ENCODE measurements at regions of chr10 and their contacts with region 1.

Region 1: DNA sequence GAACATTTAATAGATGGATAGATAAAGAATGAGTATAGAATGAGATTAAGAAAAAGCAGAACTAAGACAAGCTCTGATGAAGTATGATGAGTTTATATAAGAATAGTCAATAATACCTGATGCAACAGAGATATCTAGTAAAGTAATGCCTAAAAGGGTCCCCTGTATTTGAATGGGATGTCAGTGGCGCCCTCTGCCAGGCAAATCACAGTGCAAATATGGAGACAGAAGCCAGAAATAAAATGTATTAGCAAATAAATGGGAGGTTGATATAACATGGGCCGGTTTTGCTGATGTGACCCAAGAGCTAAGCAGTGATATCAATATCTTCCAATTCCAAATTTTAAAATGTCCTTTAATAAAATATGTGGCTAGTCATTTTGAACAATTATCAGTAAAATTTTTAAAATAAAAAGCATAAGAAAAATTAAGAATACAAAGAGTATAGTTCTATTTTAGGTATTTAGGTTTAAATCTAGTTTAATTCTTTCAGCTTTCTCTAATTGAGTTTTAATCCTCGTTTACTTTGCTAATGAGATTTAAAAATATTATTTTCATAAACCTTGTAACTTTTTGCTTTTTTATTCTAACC is 62.6 kb downstream of the ADK start:
- DNase-seq: peak; percentile 54
- H3K4me3 Mint-ChIP-seq: no peak overlapping the region
- H3K27ac Mint-ChIP-seq: peak overlapping the region; percentile 62
- H3K4me1 Mint-ChIP-seq: peaks cover 17% of the 10 kb centered on the region
- H3K27me3 Mint-ChIP-seq: no peaks in the 10 kb centered on the region
- CTCF ChIP-seq: peak; percentile 46

Region 2: DNA sequence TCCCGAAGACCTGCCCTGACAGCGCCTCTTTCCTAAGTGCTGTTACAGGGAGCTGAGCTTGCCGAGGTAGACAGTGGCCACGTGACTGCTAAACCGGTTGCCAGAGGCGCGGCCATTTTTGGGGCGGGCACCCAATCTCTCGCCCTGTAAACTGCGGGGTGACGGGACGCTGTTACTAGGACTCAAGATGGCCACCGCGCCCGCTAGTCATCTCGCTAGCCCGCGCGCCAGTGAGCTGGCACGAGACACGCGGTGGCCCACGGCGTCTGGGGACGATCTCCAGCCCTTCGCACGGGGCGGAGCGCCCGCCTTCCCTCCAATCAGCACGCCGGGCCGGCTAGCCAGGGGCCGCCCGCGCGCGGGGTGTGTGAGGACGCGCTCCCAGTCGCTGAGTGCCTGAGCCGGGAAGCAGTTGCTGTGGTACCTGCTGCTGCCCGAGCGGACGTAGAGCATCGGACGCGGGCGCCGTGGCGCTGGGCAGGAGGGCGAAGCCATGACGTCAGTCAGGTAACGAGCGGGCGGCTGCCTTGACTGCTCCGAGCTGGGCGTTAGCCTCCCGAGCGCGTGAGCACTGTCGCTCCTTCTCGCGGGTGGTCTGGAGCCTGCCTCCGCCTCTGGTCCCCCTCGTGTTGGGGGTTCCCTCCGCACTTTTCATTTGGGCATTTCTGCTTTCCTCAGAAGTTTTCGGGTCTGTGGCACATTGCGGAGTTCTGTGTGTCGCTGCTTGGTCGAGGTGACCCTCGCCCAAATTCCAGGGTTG is 37.1 kb before region 1 on chr10:
- CTCF ChIA-PET with region 1: interaction called, 3 read pairs
- intact Hi-C with region 1: loop called (anchors 5 kb)
- DNase-seq: peak; percentile 97
- H3K4me3 Mint-ChIP-seq: peak overlapping the region; percentile 98
- H3K27ac Mint-ChIP-seq: peak overlapping the region; percentile 95
- H3K4me1 Mint-ChIP-seq: peaks cover 27% of the 10 kb centered on the region
- H3K27me3 Mint-ChIP-seq: no peaks in the 10 kb centered on the region
- CTCF ChIP-seq: no peak

Region 3: DNA sequence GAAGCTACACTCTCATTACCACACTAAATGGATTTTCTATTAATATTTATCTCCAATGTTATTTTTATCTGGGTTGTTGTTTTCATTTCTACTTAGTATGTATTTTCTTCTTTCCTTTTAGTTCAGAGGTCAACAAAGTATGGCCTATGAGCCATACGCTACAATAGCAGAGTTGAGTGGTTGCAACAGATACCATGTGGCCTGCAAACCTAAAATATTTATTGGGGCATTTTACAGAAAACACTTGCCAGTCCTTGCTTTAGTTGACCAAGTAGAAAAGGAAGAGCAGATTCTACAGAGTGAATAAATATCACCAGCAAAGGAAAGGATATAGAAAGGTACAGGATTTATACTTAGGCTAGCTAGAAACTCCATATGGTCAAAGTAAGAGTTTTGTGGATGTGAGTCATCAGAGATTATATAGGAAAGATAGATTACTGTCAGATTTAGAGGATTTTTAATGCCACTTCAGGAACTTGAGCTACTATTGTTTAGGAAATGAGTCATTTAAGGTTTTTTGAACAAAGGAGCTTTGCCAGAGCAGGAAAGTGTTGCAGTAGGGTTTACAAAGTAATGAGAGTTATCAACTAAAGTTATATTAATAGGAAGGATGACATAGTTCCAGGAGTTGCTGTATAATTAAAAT is 289.4 kb after region 1 on chr10:
- CTCF ChIA-PET with region 1: no interaction called
- intact Hi-C with region 1: no loop called
- DNase-seq: no peak
- H3K4me3 Mint-ChIP-seq: peak overlapping the region; percentile 25
- H3K27ac Mint-ChIP-seq: peak overlapping the region; percentile 71
- H3K4me1 Mint-ChIP-seq: peaks cover 38% of the 10 kb centered on the region
- H3K27me3 Mint-ChIP-seq: no peaks in the 10 kb centered on the region
- CTCF ChIP-seq: no peak

Measured in Calu3 (cell line).